ENCODE measurements at regions of chr12 and their contacts with region 1.

Region 1: DNA sequence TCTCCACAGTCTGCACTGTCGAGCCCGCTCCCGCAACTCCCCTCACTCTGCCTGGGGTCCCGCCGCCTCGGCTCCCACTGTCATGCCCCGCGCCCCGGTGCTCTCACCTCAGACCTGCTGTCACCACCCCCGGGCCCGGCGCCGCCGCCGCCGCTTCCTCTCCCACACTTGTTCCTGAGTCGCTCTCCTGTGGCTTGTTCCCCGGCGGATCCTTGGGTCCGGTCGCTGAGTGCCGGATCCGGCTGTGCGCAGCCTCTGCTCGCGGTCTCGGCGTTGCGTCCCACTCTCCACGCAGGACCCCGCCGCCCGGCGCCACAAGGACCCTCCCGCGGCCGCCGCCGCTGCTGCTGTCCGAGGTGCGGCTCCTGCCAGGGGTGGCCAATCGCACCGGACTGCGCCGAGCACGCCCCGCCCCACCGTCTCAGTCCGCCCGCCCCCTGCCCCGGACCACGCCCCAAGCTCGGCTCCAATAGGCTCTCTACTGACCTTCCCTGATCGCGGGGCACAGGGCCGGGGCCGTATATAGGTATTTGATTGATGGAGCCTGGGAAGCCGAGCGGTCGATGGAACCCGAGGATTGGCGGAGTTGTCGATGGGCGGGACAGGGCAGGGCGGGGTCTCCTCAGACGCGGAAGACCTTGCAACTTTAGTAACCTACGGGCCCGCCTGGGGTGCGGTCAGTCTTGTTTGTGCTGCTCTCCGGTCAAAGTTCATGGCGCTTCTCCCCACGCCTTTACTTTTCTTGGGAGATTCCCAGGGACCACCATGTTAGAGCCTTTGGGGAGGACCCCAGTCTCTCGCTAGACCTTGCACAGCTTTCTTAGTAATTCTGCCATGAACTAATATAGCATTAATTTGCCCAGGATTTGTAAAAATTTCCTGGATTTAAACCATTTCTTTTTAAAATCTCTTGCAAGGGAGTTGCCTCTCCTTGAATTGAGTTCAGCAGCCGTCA is at the start of gene TAOK3:
- DNase-seq: peak; percentile 96
- H3K4me3 ChIP-seq: peak within 1 kb of the TSS; percentile 92
- H3K27ac ChIP-seq: peak within 1 kb of the TSS; percentile 57
- H3K27me3 ChIP-seq: no peaks in the 10 kb centered on the region
- CTCF ChIP-seq: no peak
- polyA plus RNA-seq, gene TAOK3: 48.8 and 56.4 TPM in 2 replicates

Region 2: GRCh38 chr12:118120579-118121363 is 252.0 kb before region 1 on chr12:
- CTCF ChIA-PET with region 1: interaction called, 29 read pairs
- POLR2A ChIA-PET with region 1: interaction called, 6 read pairs
- DNase-seq: peak; percentile 44
- H3K4me3 ChIP-seq: no peak overlapping the region
- H3K27ac ChIP-seq: no peak overlapping the region
- H3K27me3 ChIP-seq: no peaks in the 10 kb centered on the region
- CTCF ChIP-seq: peak; percentile 76

Region 3: GRCh38 chr12:118183705-118184104 is 189.1 kb before region 1 on chr12:
- CTCF ChIA-PET with region 1: interaction called, 333 read pairs
- POLR2A ChIA-PET with region 1: interaction called, 10 read pairs
- DNase-seq: no peak
- H3K4me3 ChIP-seq: no peak overlapping the region
- H3K27ac ChIP-seq: no peak overlapping the region
- H3K27me3 ChIP-seq: no peaks in the 10 kb centered on the region
- CTCF ChIP-seq: no peak

Region 4: GRCh38 chr12:118249547-118249946 is 123.3 kb before region 1 on chr12:
- CTCF ChIA-PET with region 1: interaction called, 10 read pairs
- POLR2A ChIA-PET with region 1: no interaction called
- DNase-seq: no peak
- H3K4me3 ChIP-seq: no peak overlapping the region
- H3K27ac ChIP-seq: no peak overlapping the region
- H3K27me3 ChIP-seq: no peaks in the 10 kb centered on the region
- CTCF ChIP-seq: no peak

Region 5: DNA sequence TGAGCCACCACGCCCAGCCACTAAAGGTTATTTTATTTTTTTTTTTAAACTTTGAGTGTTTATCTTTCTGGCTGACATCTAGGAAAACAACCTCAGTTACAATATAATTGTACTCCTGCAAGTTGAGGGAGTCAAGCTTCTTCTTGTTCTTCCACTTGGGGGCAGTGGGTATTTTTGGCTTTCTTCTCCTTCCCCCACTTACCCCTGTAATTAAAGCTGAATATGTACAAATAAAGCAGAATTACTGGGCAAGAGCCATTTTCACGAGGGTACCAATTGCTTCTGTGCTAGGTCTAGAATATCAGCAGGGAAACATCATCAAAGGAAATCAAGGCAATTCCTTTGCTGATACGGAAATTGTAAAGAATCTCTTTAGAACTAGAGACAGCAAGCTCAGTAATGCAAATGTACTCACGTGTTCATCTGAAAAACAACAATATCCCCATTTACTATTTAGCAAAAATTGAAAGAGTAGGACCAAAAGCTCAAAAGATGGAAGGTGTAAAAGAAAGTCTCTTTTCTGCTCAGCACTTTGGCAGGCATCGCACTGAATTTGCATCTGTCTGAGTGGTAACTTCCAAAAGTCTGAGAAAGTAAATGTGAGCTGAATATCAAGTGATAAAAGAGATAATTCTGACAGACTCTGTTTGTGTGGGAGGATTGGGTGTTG is 72.9 kb before region 1 on chr12:
- CTCF ChIA-PET with region 1: interaction called, 40 read pairs
- POLR2A ChIA-PET with region 1: no interaction called
- DNase-seq: no peak
- H3K4me3 ChIP-seq: no peak overlapping the region
- H3K27ac ChIP-seq: no peak overlapping the region
- H3K27me3 ChIP-seq: no peaks in the 10 kb centered on the region
- CTCF ChIP-seq: peak; percentile 15; the same call in 1 of the 2 replicates

Region 6: DNA sequence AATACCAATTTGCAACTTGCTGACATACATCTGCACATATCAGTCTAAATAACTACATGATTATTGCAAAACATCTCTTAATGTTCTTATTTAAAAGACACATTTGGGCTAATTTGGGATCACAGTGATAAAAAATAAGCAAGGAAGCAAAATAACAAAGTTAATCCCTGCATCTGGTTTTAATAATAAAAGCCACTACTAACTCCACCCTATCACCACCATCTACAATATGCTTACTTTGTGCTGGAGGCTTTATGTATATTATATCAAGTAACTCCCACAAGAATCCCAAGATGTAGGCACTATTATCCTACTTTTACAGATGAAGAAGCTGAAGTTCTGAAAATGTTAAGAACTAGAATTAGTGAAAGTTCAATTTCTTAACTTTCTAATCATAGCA is 45.8 kb before region 1 on chr12:
- CTCF ChIA-PET with region 1: interaction called, 13 read pairs
- POLR2A ChIA-PET with region 1: interaction called, 10 read pairs
- DNase-seq: no peak
- H3K4me3 ChIP-seq: no peak overlapping the region
- H3K27ac ChIP-seq: no peak overlapping the region
- H3K27me3 ChIP-seq: no peaks in the 10 kb centered on the region
- CTCF ChIP-seq: no peak

Region 7: GRCh38 chr12:118391424-118391823 is 18.6 kb after region 1 on chr12:
- CTCF ChIA-PET with region 1: interaction called, 65 read pairs
- POLR2A ChIA-PET with region 1: no interaction called
- DNase-seq: no peak
- H3K4me3 ChIP-seq: no peak overlapping the region
- H3K27ac ChIP-seq: no peak overlapping the region
- H3K27me3 ChIP-seq: no peaks in the 10 kb centered on the region
- CTCF ChIP-seq: no peak

Measured in AG04450 (cell line).